ENCODE measurements at regions of chr6 and their contacts with region 1.

Region 1: DNA sequence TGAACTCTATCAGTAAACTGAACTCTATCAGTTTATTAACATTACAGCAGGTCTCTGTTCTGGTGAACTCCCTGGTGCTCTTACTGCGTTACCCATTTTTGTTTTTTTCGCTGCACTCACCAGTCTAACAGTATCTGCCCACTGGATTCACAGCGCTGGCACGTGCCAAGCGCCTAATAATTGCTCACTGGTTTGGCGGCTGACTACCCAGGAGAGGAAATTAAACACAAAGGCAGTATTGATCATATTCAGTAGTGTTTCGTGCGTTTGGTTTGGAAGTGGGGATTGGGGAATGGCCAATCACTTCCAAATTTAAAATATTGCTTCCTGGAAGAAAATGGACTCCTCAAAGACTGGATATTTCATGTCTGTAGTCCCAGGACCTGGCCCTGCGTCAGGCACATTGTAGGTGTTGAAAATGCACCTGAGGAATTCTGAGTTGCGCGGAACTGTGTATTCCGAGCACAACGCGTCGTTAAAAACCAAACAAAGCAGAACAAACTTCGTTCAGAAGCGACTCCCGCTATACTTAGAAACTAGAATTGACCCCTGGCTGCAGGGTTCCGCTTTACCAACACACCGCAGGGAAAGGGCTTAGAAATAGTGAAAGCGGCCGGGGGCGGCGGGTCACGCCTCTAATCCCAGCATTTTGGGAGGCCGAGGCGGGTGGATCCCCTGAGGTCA is 1.1 kb upstream of the RPS12 start:
- DNase-seq: peak; percentile 68
- H3K4me3 Mint-ChIP-seq: peak overlapping the region; percentile 97
- H3K27ac Mint-ChIP-seq: peak overlapping the region; percentile 98
- H3K4me1 Mint-ChIP-seq: peaks cover 28% of the 10 kb centered on the region
- H3K27me3 Mint-ChIP-seq: peaks cover 2% of the 10 kb centered on the region

Region 2: DNA sequence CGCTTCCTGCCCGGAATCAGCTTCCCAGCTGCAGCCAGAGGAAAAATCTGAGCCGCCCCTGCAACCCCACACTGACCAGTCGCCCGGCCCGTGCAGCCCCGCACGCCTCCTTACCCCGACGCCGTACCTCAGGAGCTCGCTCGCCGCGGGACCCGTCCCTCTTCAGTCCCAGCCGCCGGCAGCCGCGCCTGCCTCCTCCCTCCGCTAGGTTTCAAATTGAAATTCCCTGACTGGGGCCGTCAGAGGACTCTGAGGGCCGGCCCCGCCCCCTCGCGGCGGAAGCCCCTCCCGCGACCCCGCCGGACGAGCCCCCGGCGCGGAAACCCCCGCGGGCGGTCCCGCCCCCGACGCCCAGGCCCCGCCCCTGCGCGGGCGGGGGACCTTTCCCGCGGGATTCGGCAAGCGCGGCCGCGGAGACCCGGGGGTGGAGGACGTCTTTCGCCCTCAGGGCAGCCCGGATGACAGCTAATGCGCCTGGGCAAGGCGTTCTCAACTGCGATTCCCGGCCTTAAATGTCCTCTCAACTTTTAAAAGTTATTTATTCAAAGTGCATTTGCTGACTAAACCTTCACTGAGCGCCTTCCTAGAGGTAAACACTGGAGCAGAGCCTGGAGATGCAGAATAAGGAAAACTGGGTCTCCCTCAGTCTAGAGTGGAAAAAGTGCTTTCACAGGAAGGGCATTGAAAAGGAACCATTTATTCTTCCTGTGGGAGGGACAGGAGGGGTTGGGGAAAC is 1750.1 kb before region 1 on chr6 and contains the start of gene EPB41L2:
- CTCF ChIA-PET with region 1: no interaction called
- POLR2A ChIA-PET with region 1: no interaction called
- intact Hi-C with region 1: loop called (anchors 10 kb)
- DNase-seq: peak; percentile 85
- H3K4me3 Mint-ChIP-seq: peak within 1 kb of the TSS; percentile 80
- H3K27ac Mint-ChIP-seq: no peak within 1 kb of the TSS
- H3K4me1 Mint-ChIP-seq: peaks cover 27% of the 10 kb centered on the region
- H3K27me3 Mint-ChIP-seq: no peaks in the 10 kb centered on the region
- total RNA-seq, gene EPB41L2: 30.4 to 37.8 TPM

Region 3: DNA sequence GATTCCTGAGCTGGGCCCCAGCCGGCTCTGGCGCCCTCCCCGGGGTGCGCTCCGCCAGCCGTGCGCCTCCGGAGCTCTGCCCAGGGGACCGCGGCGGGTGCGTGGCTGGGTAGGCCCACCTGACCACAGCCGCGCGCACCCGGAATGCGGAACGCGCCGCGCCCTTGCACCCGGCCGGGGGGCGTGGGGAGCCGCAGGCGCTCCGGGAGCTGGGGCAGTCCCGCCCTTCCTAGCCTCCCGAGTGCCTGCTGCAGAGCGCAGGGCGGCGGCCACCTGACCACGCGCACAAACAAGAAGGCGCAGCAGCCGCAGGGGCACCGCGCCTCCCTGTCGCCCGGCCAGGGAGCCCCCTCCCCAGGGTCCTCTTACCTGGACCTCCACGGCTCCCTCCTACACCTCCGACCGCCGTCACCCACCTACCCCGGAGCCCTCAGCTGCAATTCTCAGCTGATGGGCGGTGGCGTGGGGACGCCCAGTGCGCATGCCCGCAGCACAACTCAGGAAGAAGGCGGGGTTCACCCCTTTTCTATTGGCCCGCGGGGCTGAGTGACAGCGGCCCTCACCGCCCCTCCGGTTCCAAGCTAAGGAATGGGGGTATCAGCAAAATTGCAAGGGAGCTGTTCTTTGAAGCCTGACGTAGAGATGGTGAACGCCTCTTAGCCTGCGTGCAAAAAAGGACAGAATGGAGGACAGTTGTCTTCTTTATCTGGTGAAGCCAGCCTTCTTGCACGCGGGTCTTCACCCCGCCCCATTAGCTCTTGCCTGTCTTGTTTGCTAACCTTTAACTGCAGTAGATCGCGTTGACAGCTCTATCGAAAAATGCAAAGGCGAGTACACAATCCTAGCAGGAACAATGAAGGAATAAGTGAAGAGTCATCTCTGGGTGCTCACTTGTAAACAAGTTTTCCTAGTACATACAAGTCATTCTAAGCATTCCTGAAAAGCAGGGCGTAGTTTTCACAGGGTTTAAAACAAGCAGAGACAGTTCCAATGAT is 300.4 kb before region 1 on chr6 and contains the start of gene STX7:
- CTCF ChIA-PET with region 1: interaction called, 5 read pairs
- POLR2A ChIA-PET with region 1: interaction called, 3 read pairs
- intact Hi-C with region 1: loop called (anchors 1 kb)
- DNase-seq: peak; percentile 90
- H3K4me3 Mint-ChIP-seq: peak within 1 kb of the TSS; percentile 95
- H3K27ac Mint-ChIP-seq: peak within 1 kb of the TSS; percentile 69
- H3K4me1 Mint-ChIP-seq: peaks cover 36% of the 10 kb centered on the region
- H3K27me3 Mint-ChIP-seq: no peaks in the 10 kb centered on the region
- total RNA-seq, gene STX7: 16.2 to 19.0 TPM

Region 4: DNA sequence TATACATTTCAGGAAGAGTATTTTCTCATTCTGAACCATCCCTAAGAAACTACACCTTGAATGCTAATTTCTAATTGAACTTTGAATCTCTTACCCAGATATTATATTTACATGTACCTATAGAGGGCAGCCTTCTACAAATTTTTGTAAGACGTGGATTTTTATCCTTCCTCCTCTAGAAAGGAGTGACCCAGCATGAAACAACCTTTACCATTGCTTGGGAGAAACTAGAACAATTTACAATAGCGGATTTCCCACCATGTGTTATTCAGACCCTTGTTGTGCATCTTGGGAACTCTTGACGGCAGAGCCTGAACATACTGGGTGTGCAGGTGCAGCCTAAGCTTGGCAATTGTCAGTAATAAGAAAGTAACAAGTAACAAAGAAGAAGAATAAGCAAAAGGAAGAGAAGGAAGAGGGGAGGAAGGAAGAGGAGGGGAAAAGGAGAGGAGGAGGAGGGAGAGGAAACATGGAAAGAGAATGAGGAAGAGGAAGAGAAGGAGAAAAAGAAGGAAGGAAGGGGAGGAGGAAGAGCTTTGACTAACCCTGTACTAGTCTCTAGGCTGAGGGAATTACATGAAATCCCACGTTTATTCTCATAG is 143.5 kb before region 1 on chr6:
- CTCF ChIA-PET with region 1: interaction called, 4 read pairs
- POLR2A ChIA-PET with region 1: interaction called, 4 read pairs
- intact Hi-C with region 1: loop called (anchors 5 kb)
- DNase-seq: no peak
- H3K4me3 Mint-ChIP-seq: no peak overlapping the region
- H3K27ac Mint-ChIP-seq: no peak overlapping the region
- H3K4me1 Mint-ChIP-seq: peaks cover 4% of the 10 kb centered on the region
- H3K27me3 Mint-ChIP-seq: peaks cover 5% of the 10 kb centered on the region

Region 5: DNA sequence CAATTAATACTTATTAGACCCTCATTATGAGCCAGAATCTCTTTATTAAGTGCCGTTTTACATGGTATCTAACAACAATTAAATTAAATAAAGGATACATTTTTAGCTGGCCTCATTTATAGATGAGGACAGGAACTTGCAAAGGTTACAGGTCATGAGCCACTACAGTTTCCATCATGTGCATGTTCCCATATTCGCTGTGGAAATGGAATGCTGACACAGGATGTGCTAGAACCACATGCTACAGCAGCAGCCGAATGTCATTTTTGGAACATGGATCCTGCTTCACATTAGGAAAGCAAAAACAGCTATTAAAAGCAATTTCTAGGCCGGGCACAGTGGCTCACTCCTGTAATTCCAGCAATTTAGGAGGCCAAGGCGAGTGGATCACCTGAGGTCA is 20.8 kb before region 1 on chr6:
- CTCF ChIA-PET with region 1: interaction called, 21 read pairs
- POLR2A ChIA-PET with region 1: interaction called, 76 read pairs
- intact Hi-C with region 1: no loop called
- DNase-seq: no peak
- H3K4me3 Mint-ChIP-seq: no peak overlapping the region
- H3K27ac Mint-ChIP-seq: no peak overlapping the region
- H3K4me1 Mint-ChIP-seq: peaks cover 31% of the 10 kb centered on the region
- H3K27me3 Mint-ChIP-seq: no peaks in the 10 kb centered on the region

Region 6: DNA sequence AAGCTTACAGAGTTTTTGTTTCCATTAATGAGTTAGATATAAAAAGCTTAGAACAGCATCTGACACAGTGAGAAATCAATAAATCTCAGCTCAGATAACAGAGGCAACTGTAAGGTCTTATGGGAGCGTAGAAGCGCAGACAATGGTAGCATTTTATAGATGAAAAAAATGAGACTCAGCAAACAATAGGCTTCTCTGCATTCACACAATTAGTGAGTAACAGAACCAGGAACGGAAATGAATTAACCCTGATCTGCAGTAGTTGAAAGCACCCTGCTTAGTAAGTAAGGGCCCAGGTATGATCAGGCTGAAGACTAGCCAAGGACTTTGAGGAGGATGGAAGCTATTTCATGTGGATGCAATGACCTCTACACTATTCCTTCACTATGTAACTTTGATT is 280.6 kb after region 1 on chr6:
- CTCF ChIA-PET with region 1: no interaction called
- POLR2A ChIA-PET with region 1: no interaction called
- intact Hi-C with region 1: no loop called
- DNase-seq: no peak
- H3K4me3 Mint-ChIP-seq: no peak overlapping the region
- H3K27ac Mint-ChIP-seq: no peak overlapping the region
- H3K4me1 Mint-ChIP-seq: no peaks in the 10 kb centered on the region
- H3K27me3 Mint-ChIP-seq: no peaks in the 10 kb centered on the region

Region 7: DNA sequence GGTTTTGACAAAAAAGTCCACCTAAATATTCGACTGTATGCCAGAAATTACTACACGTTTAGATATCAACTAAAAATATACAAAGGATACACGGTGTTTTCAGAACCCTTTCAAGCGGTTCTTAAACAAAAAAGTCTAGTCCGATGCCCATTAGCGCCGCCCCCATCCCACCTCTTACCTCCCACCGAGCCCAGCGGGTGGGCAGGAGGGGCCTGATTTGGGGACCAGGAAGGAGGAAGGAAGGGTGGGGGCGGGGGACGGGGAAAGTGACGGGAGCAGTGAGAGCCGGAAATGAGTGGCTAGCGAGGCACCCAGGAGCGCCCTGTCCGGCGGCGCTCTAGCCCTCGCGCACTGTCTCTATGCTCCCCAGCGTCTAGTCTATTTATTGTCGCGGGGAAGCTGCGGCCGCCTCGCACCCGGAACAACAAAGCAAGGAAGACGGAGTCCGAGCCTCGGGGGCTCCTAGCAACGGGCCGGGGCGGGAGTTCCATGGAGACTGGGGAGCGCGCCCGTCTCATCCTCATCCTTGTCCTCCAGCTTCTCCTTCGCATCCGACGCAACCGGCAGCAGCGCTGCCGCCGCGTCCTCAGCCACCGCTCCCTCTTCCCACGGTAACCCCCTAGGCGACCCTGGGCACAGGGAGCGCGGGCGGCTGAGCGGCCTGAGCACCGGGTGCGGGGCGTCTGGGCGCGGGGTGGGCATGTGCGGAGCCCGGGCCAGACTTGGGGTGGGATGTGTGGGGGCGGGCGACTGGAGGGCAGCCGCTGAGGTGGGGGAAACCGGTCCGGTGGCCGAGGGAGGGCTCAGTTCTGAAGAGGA is 1139.7 kb after region 1 on chr6 and contains the start of gene TBPL1:
- CTCF ChIA-PET with region 1: no interaction called
- POLR2A ChIA-PET with region 1: no interaction called
- intact Hi-C with region 1: loop called (anchors 5 kb)
- DNase-seq: peak; percentile 93
- H3K4me3 Mint-ChIP-seq: peak within 1 kb of the TSS; percentile 93
- H3K27ac Mint-ChIP-seq: peak within 1 kb of the TSS; percentile 89
- H3K4me1 Mint-ChIP-seq: peaks cover 37% of the 10 kb centered on the region
- H3K27me3 Mint-ChIP-seq: no peaks in the 10 kb centered on the region
- total RNA-seq, gene TBPL1: 31.3 to 35.7 TPM

Measured in activated CD4-positive, alpha-beta memory T cell treated with anti-CD3 and anti-CD28 coated beads for 36 hours (primary cell).